ENCODE measurements at regions of chrX and their contacts with region 1.

Region 1: DNA sequence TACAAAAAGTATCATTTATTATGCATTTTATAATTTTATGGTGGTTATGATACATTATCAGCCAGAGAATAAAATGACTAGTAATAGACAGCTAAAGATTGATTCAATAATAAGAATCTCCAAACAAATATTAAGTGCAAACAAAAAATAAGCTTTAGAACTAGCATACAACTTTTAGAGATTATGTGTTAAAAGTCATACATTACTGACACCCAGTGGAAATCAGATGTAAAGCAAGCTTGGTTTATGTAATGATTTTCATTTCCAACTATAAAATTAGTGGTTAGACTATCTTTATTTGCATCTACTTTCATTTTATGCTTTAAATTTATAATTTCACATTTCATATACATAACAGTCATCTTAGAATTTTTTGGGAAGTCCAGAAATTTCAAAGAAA is 57.7 kb downstream of the IL13RA2 start:
- DNase-seq: no peak
- H3K4me3 ChIP-seq: no peak overlapping the region
- H3K27ac ChIP-seq: no peak overlapping the region
- H3K27me3 ChIP-seq: no peaks in the 10 kb centered on the region
- CTCF ChIP-seq: peak; percentile 38

Region 2: DNA sequence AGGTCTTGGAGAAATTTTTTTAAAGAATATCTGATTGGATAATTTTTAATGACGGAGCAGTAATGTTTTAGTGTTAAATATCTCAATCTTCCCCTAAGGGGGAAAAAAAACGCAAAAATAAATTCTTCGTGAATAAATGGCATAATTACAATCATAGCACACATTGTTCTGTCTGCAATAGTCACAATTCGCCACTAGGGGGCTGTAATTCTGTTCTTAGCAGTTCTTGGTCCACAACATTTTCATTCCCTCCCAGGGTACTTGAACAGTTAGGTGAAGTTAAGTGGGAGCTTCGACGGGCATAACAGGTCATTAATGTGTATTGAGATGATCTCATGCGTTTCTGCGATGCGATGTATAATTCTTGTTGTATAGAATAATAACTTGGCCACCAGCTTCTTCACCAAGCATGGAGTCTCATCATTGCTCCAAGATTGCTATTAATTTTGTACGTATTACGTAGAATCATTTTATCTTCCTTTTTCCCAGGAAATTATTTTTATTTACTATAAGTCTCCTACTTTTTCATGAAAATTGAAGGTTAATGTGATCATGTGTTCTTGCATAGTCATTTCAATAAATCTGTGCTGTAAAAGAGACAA is 348.6 kb before region 1 on chrX:
- CTCF ChIA-PET with region 1: interaction called, 41 read pairs
- POLR2A ChIA-PET with region 1: no interaction called
- DNase-seq: peak; percentile 7
- H3K4me3 ChIP-seq: no peak overlapping the region
- H3K27ac ChIP-seq: no peak overlapping the region
- H3K27me3 ChIP-seq: no peaks in the 10 kb centered on the region
- CTCF ChIP-seq: peak; percentile 71

Region 3: GRCh38 chrX:114626323-114626722 is 333.4 kb before region 1 on chrX:
- CTCF ChIA-PET with region 1: interaction called, 26 read pairs
- POLR2A ChIA-PET with region 1: no interaction called
- DNase-seq: no peak
- H3K4me3 ChIP-seq: no peak overlapping the region
- H3K27ac ChIP-seq: no peak overlapping the region
- H3K27me3 ChIP-seq: no peaks in the 10 kb centered on the region
- CTCF ChIP-seq: peak; percentile 34; the same call in 1 of the 2 replicates